ENCODE measurements at regions of chr3 and their contacts with region 1.

Region 1: DNA sequence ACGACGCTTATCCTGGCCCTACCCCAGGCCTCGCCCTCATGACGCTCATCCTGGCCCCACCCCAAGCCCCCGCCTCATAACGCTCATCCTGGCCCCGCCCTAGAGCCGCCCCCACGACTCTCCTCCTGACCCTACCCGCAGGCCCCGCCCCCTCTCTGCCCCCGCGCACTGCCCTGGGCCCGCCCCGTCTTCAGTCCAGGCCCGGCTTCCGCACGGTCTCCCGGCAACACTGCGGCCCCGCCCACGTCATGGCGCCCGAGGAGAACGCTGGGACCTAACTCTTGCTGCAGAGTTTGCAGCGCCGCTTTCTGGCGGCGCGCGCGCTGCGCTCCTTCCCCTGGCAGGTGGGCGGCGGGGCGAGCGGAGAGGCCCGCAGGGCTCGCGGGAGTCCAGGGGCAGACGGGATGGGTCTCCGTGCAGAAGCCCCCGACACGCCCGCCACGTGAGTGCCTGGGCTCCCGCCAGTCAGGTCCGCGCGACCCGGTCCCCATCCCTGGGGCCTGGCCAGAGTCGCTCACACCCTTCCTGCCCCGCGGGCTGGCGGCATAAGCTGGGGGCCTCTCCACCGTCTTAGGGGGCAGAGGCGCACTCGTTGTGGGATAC is 52.5 kb upstream of the ROPN1B start:
- DNase-seq: peak; percentile 99
- ATAC-seq: peak; percentile 94
- H3K4me3 Mint-ChIP-seq: peak overlapping the region; percentile 82
- H3K27ac Mint-ChIP-seq: peak overlapping the region; percentile 72
- H3K4me1 Mint-ChIP-seq: peaks cover 28% of the 10 kb centered on the region
- H3K27me3 Mint-ChIP-seq: no peaks in the 10 kb centered on the region

Region 2: DNA sequence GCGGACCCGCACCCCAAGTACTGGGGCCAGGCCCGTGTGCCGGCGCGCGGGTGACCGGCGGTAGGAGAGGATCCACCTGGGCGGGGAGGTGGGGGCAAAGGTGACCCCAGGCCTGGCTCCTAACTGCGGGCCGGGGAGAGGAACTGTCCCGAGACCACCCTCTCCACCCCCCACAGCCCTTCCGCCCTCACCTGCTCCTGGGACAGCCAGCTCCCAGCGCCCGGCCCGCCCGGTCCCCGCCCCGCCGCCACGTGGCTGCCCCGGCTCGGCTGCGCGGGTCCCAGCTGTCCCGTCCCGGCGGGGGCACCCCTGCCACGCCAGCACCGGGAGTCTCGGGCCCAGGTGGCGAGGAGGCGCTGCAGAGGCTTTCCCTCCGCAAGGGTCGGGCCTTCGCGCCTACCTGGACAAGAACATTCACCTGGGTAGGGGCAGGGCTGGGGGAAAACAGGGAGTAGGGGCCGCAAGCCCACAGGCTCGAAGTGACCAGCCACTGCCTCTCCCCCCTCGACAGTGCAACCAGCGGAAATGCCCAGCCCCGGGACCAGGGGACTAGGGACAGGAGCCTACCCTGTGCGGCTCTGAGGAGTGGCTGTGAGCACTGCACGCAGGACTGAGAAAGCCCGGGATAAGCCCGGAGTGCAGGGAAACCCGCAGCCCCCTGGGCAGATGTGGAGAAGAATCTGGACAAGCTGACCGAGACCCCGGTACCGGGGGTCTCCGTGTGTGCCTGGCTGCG is 703.8 kb before region 1 on chr3 and contains the start of gene SLC12A8:
- CTCF ChIA-PET with region 1: no interaction called
- POLR2A ChIA-PET with region 1: no interaction called
- intact Hi-C with region 1: no loop called
- DNase-seq: no peak
- ATAC-seq: no peak
- H3K4me3 Mint-ChIP-seq: peak within 1 kb of the TSS; percentile 13
- H3K27ac Mint-ChIP-seq: no peak within 1 kb of the TSS
- H3K4me1 Mint-ChIP-seq: peaks cover 9% of the 10 kb centered on the region
- H3K27me3 Mint-ChIP-seq: peaks cover 49% of the 10 kb centered on the region
- total RNA-seq, gene SLC12A8: 0.26 to 0.39 TPM

Region 3: DNA sequence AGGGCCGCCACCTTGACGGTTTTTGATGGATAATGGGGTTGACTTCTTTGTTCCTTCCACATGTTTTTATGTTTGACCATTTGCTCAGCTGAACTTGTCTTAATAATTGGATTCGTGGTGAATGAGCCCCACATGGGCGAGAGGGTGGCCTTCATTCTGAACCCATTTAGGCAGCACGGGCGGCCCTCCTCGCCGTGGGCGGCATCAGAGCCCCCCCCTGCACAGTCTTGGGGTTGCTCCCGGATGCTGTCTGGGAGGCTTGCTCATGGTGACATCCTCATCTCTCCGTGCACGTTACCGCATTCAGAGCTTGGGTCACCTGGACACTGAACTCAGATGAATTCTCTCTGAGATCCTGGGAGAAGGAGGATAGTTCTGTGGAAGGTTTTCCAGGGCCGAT is 148.8 kb before region 1 on chr3:
- CTCF ChIA-PET with region 1: no interaction called
- POLR2A ChIA-PET with region 1: no interaction called
- intact Hi-C with region 1: loop called in 1 of 2 experiments (anchors 1 kb)
- DNase-seq: no peak
- ATAC-seq: no peak
- H3K4me3 Mint-ChIP-seq: peak overlapping the region; percentile 65
- H3K27ac Mint-ChIP-seq: no peak overlapping the region
- H3K4me1 Mint-ChIP-seq: peaks cover 9% of the 10 kb centered on the region
- H3K27me3 Mint-ChIP-seq: peaks cover 18% of the 10 kb centered on the region

Region 4: DNA sequence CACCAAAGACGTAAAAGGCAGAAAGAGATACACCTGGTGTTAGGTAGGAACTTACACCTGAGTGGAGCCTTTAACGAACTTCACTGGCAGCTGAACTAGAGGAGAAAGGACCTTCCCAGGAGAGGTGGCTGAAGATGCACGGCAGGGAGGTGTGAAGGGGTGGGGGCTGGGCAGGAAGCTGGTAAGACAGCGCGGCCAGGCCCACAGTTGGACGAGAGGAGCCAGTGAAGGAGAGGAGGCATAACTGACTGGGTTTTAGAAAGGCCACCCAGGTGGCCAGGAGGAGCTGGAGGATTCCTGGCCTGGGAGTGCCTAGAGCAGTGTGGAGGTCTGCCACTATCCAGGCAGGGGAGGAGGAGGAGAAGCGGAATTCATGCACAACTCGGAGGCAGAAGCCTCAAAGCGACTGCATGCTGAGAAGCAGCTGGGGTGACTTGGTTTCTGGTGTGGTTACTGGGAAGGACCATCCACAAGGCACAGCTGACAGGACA is 115.5 kb after region 1 on chr3:
- CTCF ChIA-PET with region 1: no interaction called
- POLR2A ChIA-PET with region 1: no interaction called
- intact Hi-C with region 1: no loop called
- DNase-seq: no peak
- ATAC-seq: no peak
- H3K4me3 Mint-ChIP-seq: no peak overlapping the region
- H3K27ac Mint-ChIP-seq: no peak overlapping the region
- H3K4me1 Mint-ChIP-seq: peaks cover 2% of the 10 kb centered on the region
- H3K27me3 Mint-ChIP-seq: no peaks in the 10 kb centered on the region

Region 5: DNA sequence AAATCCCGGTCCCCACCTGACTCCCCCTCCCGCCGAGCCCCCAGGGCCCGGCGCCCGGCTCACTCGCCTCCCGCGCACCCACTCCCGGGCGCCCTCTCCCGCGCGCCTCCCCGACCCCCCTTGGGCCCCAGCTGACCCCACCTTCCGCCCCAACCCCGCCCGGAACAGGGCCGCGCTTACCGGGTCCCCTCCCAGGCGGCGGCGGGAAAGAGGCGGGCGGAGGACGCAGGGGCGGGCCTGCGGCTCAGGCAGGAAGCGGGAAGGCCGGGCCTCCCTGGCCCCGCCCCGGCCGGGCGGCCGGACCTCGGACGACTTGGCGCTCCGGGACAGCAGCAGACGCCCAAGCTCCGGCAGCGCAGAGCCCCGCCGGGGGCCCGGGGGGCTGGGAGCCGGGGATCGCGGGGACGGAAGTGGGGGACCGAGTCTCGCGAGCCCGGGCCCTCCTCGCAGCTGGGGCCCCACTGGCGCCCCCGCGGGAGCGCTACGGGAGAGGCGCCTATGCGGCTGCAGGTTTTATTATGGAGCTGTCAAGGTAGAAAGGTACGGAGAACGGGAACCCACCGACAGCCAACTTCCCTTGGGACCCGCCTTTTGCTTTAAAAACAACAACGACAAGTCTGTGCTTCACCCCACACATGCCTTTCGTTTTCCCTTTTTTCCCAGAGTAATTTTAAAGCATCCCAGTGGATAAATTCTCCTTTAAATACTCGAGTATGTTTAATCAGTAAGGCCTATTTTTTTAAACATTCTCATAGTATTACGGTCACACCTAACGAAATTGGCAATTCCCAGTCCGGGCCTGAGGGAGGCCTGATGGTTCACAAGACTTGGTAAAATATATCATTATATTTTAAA is 167.7 kb after region 1 on chr3 and contains the start of gene SLC41A3:
- CTCF ChIA-PET with region 1: no interaction called
- POLR2A ChIA-PET with region 1: no interaction called
- intact Hi-C with region 1: loop called (anchors 1 kb)
- DNase-seq: peak; percentile 93
- ATAC-seq: peak; percentile 92
- H3K4me3 Mint-ChIP-seq: peak within 1 kb of the TSS; percentile 92
- H3K27ac Mint-ChIP-seq: peak within 1 kb of the TSS; percentile 96
- H3K4me1 Mint-ChIP-seq: peaks cover 24% of the 10 kb centered on the region
- H3K27me3 Mint-ChIP-seq: no peaks in the 10 kb centered on the region
- total RNA-seq, gene SLC41A3: 23.1 to 26.6 TPM

Region 6: GRCh38 chr3:126300761-126301481 is 384.4 kb after region 1 on chr3:
- CTCF ChIA-PET with region 1: no interaction called
- POLR2A ChIA-PET with region 1: no interaction called
- intact Hi-C with region 1: no loop called
- DNase-seq: no peak
- ATAC-seq: no peak
- H3K4me3 Mint-ChIP-seq: no peak overlapping the region
- H3K27ac Mint-ChIP-seq: no peak overlapping the region
- H3K4me1 Mint-ChIP-seq: no peaks in the 10 kb centered on the region
- H3K27me3 Mint-ChIP-seq: peaks cover 3% of the 10 kb centered on the region

Region 7: GRCh38 chr3:126389112-126389793 is 472.8 kb after region 1 on chr3:
- CTCF ChIA-PET with region 1: no interaction called
- POLR2A ChIA-PET with region 1: no interaction called
- intact Hi-C with region 1: loop called in 1 of 2 experiments (anchors 5 kb)
- DNase-seq: peak; percentile 71
- ATAC-seq: peak; percentile 84
- H3K4me3 Mint-ChIP-seq: no peak overlapping the region
- H3K27ac Mint-ChIP-seq: no peak overlapping the region
- H3K4me1 Mint-ChIP-seq: peaks cover 5% of the 10 kb centered on the region
- H3K27me3 Mint-ChIP-seq: peaks cover 52% of the 10 kb centered on the region

Region 8: DNA sequence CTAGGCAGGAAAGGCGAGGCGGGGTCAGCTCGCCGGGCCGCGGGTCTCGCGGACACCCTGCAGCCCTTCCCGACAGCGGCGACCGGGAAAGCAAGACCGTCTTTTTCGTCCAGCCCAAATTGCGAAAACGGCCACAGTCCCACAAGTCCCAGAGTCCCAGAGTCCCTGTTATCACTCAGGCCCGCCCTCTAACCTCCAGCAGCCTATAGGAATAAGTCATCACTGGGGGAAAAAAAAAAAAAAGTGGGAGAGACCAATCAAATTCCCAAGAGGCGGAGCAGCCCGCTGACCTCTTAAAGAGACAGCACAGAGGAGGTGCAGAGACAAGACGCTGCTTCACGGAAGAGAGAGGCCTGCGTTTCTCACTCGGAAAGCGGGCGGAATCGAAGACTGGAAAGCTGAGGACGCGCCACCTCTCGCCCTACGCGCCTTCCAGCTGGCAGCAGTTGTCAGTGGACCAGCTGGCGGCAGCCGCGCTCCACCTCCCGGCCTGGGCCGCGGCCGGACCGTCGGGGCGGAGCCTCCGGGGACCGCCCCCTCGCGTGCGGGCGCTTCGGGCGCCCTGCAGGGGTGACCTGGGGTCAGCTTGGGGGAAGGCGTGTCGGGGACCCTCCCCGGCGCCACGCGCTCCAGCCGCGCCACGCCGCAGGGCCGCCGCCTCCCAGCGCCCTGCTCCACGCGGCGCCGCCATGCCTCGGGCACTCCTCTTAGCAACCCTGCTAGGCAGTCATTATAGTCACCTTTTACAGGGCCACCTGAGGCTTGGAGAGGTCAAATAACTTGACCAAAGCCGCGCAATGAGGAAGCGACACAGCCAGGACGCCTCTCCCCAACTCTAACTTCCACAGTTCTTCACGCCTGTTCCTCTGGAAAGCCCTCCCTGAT is 1674.4 kb after region 1 on chr3 and contains the start of gene TPRA1:
- CTCF ChIA-PET with region 1: no interaction called
- POLR2A ChIA-PET with region 1: no interaction called
- intact Hi-C with region 1: loop called in 1 of 2 experiments (anchors 2 kb)
- DNase-seq: peak; percentile 88
- ATAC-seq: peak; percentile 86
- H3K4me3 Mint-ChIP-seq: peak within 1 kb of the TSS; percentile 84
- H3K27ac Mint-ChIP-seq: peak within 1 kb of the TSS; percentile 96
- H3K4me1 Mint-ChIP-seq: peaks cover 25% of the 10 kb centered on the region
- H3K27me3 Mint-ChIP-seq: no peaks in the 10 kb centered on the region
- total RNA-seq, gene TPRA1: 22.5 to 24.8 TPM

Measured in activated CD4-positive, alpha-beta T cell treated with anti-CD3 and anti-CD28 coated beads for 36 hours (primary cell).